Sigmoid colon (tissue), 7 donors: ENCODE measurements at regions of chr17 and their contacts with region 1.

Region 1: DNA sequence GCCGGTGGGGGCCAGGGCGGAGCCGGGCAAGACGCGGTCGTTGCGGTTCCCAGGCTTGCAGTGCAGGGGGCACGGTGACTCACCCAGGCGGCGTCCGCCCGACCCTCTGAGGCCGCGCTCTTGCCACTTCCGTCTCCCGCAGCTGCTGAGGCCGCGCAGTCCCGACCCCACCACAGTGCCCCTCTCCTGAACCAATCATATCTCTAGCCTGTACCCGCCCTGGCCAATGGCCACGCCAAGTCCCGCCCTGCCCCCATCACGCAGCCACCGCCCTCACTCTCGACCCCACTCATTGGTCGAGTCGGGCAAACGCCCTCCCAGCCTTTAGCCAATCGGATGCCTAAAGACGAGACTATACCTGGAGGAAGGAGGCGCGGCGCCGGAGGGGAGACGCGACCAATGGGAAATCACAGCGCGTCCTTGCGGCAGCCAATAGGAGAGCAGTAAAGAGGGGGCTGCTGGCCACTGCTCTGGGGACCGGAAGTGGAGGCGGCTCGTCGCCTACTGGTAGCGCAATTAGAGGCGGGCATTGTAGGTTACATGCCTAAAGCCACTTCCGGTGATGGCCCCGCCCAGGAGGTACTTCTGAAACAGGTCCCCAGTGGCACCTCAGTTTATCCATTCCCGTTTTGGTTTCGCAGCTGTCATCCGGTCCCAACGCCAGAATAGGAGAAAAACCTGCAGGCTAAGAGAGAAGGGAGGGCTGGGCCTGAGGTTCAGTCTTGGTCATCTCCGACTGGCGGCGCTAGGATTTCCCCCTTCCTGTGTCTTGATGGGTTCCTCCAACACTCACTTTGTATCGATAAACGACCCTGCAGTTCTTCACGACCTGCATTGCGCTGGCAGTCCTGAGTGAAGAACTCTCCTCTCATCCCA is 3.5 kb upstream of the MTMR4 start:
- DNase-seq: peak; percentile 100
- H3K4me3 ChIP-seq: peak overlapping the region; percentile 70 to 85 (median 81)
- H3K27ac ChIP-seq: peak overlapping the region; percentile 95 to 98 (median 96)
- H3K4me1 ChIP-seq: peaks cover 0 to 46% (median 39%) of the 10 kb centered on the region in 4 donors
- H3K27me3 ChIP-seq: no peaks in the 10 kb centered on the region
- CTCF ChIP-seq: no peak
- EP300 ChIP-seq: peak in 1 of 4 donors; percentile 50
- POLR2A ChIP-seq: peak; percentile 41 to 71

Region 2: DNA sequence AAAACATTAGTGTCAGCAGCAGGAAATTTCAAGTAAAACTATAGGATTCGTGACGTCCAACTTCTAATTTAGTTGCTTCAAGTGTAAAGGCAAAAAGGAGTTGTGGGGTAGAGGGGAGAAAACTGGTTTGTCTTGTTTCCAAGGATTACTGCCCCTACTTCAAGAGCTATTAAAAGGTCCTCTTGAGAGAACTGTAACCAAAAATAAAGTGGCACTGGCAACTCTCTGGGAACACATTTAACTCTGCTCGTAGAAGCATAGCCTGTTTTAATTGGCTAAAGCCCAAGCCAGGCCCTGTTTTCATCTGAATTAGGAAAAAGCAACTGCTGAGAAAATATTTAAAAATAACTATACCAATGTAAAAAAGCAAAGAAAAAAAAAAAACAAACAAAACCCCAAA is 1484.7 kb before region 1 on chr17:
- intact Hi-C with region 1: no loop called
- DNase-seq: no peak
- H3K4me3 ChIP-seq: no peak overlapping the region
- H3K27ac ChIP-seq: peak overlapping the region; percentile 81 to 87 (median 84)
- H3K4me1 ChIP-seq: peaks cover 0 to 61% (median 32%) of the 10 kb centered on the region in 4 donors
- H3K27me3 ChIP-seq: no peaks in the 10 kb centered on the region
- CTCF ChIP-seq: no peak
- EP300 ChIP-seq: no peak
- POLR2A ChIP-seq: no peak

Region 3: GRCh38 chr17:58136669-58137283 is 381.2 kb before region 1 on chr17:
- intact Hi-C with region 1: no loop called
- DNase-seq: no peak
- H3K4me3 ChIP-seq: no peak overlapping the region
- H3K27ac ChIP-seq: no peak overlapping the region
- H3K4me1 ChIP-seq: no peaks in the 10 kb centered on the region
- H3K27me3 ChIP-seq: peaks cover 0 to 27% (median 0%) of the 10 kb centered on the region in 3 donors
- CTCF ChIP-seq: no peak
- EP300 ChIP-seq: no peak
- POLR2A ChIP-seq: no peak

Region 4: GRCh38 chr17:58324409-58325288 is 193.3 kb before region 1 on chr17:
- intact Hi-C with region 1: loop called (anchors 5 kb)
- DNase-seq: no peak
- H3K4me3 ChIP-seq: peak overlapping the region; percentile 60 to 94 (median 73)
- H3K27ac ChIP-seq: peak overlapping the region; percentile 65 to 80 (median 75)
- H3K4me1 ChIP-seq: peaks cover 0 to 26% (median 22%) of the 10 kb centered on the region in 4 donors
- H3K27me3 ChIP-seq: peaks cover 0 to 6% (median 0%) of the 10 kb centered on the region in 3 donors
- CTCF ChIP-seq: no peak
- EP300 ChIP-seq: no peak
- POLR2A ChIP-seq: no peak

Region 5: GRCh38 chr17:58382108-58382871 is 135.7 kb before region 1 on chr17:
- intact Hi-C with region 1: no loop called
- DNase-seq: no peak
- H3K4me3 ChIP-seq: no peak overlapping the region
- H3K27ac ChIP-seq: no peak overlapping the region
- H3K4me1 ChIP-seq: no peaks in the 10 kb centered on the region
- H3K27me3 ChIP-seq: peaks cover 0 to 4% (median 0%) of the 10 kb centered on the region in 3 donors
- CTCF ChIP-seq: no peak
- EP300 ChIP-seq: no peak
- POLR2A ChIP-seq: no peak

Region 6: DNA sequence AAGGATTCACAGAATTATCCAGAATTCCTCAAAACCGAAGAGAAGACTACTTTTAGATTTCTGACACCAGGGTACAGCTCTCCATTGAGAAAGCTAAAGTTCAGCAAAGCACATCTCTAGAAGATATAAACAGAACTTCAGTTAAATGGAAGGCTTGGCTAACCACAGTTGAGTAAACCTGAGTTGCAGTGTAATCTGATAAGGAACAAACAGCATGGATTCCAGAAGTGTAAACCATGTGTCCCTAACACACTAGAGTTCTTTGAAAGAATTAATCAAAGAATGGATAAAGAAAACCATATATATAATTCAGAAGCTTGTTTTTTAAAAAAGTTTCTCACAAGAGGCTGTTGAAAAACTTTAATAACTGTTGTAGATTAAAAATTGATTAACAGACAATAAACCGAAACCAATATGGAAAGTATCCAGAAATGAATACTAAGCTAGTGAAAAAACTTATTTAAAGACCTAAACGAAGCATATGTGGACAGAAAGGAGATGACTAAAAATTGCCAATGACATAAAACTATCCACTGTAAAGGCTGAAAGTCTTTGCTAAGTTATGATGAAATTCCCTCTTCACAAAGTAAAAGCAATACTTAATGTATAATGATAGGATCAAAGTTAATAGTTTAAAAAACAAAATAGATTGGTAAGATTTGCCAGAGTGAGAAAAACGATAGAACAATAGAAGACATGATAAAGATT is 104.9 kb before region 1 on chr17:
- intact Hi-C with region 1: no loop called
- DNase-seq: no peak
- H3K4me3 ChIP-seq: no peak overlapping the region
- H3K27ac ChIP-seq: no peak overlapping the region
- H3K4me1 ChIP-seq: peaks cover 0 to 7% (median 2%) of the 10 kb centered on the region in 4 donors
- H3K27me3 ChIP-seq: no peaks in the 10 kb centered on the region
- CTCF ChIP-seq: no peak
- EP300 ChIP-seq: no peak
- POLR2A ChIP-seq: no peak

Region 7: DNA sequence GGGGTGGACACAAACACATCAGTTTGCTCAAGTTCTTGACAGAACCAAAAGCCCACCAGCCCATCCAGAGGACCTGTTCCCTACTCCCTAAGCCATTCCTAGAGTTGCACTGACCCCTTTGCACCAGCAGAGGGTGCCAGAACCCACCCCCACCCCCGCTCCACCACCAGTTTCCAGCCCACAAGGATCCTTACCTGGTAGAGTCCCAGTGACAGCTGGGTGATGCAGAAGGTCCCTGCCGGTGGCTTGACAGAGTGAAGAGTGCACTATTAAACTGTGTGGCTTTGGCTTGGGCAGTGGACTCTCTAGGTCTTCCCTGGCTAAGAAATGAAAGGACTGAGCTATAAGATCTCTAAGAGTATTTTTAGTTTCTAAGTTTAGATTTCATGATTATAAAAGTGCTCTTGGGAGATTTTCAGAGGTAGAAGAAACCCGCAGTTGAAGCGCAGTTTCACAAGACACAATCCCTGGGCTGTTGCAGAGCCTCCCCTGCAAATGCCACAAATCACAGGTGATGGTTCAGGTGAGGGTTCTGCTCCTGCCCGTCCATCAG is 69.8 kb after region 1 on chr17:
- intact Hi-C with region 1: loop called (anchors 2 kb)
- DNase-seq: peak; percentile 67
- H3K4me3 ChIP-seq: no peak overlapping the region
- H3K27ac ChIP-seq: no peak overlapping the region
- H3K4me1 ChIP-seq: peaks cover 0 to 3% (median 0%) of the 10 kb centered on the region in 4 donors
- H3K27me3 ChIP-seq: no peaks in the 10 kb centered on the region
- CTCF ChIP-seq: peak; percentile 40 to 91 (median 79)
- EP300 ChIP-seq: no peak
- POLR2A ChIP-seq: no peak

Region 8: DNA sequence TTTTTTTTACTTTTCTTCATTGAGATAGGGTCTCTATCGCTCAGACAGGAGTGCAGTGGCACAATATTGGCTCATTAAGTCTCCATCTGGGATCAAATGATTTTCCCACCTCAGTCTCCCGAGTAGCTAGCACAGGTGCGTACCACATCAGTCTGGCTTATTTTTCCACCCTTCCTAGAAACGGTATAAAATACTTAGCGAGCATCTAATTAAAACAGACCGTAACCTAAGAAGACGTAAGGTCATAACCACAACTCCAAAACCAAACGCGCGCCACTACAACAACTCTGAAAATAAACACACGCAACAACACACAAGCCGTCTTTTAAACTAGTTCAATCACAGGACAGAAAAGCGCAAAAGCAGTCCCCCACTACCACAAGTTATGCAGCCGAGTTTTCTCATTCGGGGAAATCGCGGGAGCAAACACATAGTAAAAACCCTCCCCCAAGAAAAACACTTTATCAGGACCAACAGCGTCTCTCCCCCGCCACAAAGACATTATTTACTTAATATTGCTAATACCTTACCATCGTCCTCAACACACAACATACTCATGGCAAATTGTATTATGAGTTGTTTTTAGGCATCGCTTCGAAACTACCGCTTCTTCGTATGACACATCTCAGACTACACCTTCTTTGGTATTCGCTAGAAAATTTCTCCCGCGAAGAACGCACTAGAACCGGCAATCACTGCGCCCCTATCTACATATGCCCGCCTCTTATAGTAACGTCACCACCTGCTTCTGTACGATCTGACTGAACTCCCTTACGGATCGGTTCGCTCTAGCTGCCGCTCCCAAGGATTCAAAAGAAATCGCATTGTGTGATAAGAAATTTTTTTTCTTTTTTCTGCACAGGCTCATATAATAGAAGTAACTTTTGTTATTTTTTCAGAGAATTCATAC is 141.1 kb after region 1 on chr17:
- intact Hi-C with region 1: loop called (anchors 2 kb)
- DNase-seq: peak; percentile 91
- H3K4me3 ChIP-seq: peak overlapping the region; percentile 26 to 50 (median 44)
- H3K27ac ChIP-seq: peak overlapping the region; percentile 74 to 85 (median 77)
- H3K4me1 ChIP-seq: peaks cover 0 to 9% (median 5%) of the 10 kb centered on the region in 4 donors
- H3K27me3 ChIP-seq: no peaks in the 10 kb centered on the region
- CTCF ChIP-seq: no peak
- EP300 ChIP-seq: peak in 1 of 4 donors; percentile 25
- POLR2A ChIP-seq: peak; percentile 88 to 98

Region 9: GRCh38 chr17:59004338-59005111 is 486.6 kb after region 1 on chr17:
- intact Hi-C with region 1: loop called (anchors 2 kb)
- DNase-seq: no peak
- H3K4me3 ChIP-seq: no peak overlapping the region
- H3K27ac ChIP-seq: no peak overlapping the region
- H3K4me1 ChIP-seq: peaks cover 0 to 3% (median 0%) of the 10 kb centered on the region in 4 donors
- H3K27me3 ChIP-seq: no peaks in the 10 kb centered on the region
- CTCF ChIP-seq: peak; percentile 73 to 95 (median 85)
- EP300 ChIP-seq: no peak
- POLR2A ChIP-seq: no peak

Region 10: GRCh38 chr17:59155439-59156182 is 637.6 kb after region 1 on chr17 and contains the start of gene PRR11:
- intact Hi-C with region 1: loop called (anchors 5 kb)
- DNase-seq: peak; percentile 98
- H3K4me3 ChIP-seq: peak within 1 kb of the TSS; percentile 59 to 81 (median 70)
- H3K27ac ChIP-seq: peak within 1 kb of the TSS; percentile 81 to 92 (median 88)
- H3K4me1 ChIP-seq: peaks cover 0 to 25% (median 19%) of the 10 kb centered on the region in 4 donors
- H3K27me3 ChIP-seq: no peaks in the 10 kb centered on the region
- CTCF ChIP-seq: no peak
- EP300 ChIP-seq: no peak
- POLR2A ChIP-seq: no peak
- total RNA-seq, gene PRR11: 0.36 to 1.2 (median 0.49) TPM in 3 of 4 donors, not detected in the other

Region 11: DNA sequence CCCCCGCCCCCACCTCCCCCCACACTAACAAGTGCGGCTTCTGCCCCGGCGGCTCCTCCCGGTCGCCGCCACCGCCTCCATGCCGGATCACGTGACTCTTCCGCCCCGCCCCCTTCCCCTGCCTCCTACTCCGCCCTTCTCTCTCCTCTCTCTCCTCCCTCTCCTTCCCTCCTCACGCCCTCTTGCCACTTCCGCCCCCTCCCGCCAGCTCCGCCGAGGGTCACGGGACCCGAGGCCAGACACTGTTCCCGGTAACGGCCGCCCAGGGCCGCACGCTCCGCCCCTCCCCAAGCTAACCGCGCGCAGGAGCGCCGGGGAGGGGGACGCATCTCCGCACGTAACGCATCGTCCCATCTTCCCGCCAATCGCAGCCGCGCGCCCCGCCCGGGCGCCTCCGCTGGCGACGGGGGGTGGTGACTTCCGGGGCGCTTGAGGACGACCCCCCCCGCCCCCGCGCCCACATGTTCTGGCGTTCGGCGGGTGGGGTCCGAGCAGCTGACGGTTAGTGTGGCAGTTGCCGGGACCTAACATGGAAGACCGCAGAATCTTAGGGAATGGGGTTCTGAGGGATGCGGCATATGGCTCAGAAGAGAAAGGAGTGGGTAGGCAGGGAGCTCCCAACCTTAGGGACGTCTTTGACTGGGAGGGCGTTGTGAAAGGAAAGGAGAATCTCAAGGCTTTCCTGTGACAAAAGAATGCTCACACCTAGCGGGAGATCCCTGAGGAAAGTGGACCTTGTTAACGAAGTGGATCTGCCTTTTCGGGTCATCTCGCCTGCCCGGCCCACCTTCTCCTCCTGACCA is 1874.3 kb after region 1 on chr17 and contains the start of gene USP32:
- intact Hi-C with region 1: loop called (anchors 10 kb)
- DNase-seq: peak; percentile 99
- H3K4me3 ChIP-seq: peak within 1 kb of the TSS; percentile 72 to 93 (median 79)
- H3K27ac ChIP-seq: peak within 1 kb of the TSS; percentile 94 to 98 (median 95)
- H3K4me1 ChIP-seq: peaks cover 0 to 40% (median 34%) of the 10 kb centered on the region in 4 donors
- H3K27me3 ChIP-seq: no peaks in the 10 kb centered on the region
- CTCF ChIP-seq: peak in 2 of 4 experiments; percentile 15 to 18
- EP300 ChIP-seq: peak in 3 of 4 donors; percentile 36 to 91 (median 82)
- POLR2A ChIP-seq: peak; percentile 41 to 67
- total RNA-seq, gene USP32: 39.6 to 50.9 (median 44.1) TPM